Activated B cell treated with CpG ODN at 0.5 μM for 24 hours (primary cell): ENCODE measurements at regions of chr19 and their contacts with region 1.

Region 1: GRCh38 chr19:41521931-41522555 is 53.9 kb upstream of the CEACAM21 start:
- DNase-seq: peak; percentile 59
- ATAC-seq: peak; percentile 43
- H3K4me3 Mint-ChIP-seq: peak overlapping the region; percentile 85
- H3K27ac Mint-ChIP-seq: peak overlapping the region; percentile 98
- H3K4me1 Mint-ChIP-seq: peaks cover 43% of the 10 kb centered on the region
- H3K27me3 Mint-ChIP-seq: no peaks in the 10 kb centered on the region
- CTCF ChIP-seq: no peak

Region 2: GRCh38 chr19:41462497-41462896 is 59.5 kb before region 1 on chr19:
- CTCF ChIA-PET with region 1: no interaction called
- POLR2A ChIA-PET with region 1: interaction called, 5 read pairs
- intact Hi-C with region 1: loop called (anchors 2 kb)
- DNase-seq: no peak
- ATAC-seq: no peak
- H3K4me3 Mint-ChIP-seq: peak overlapping the region; percentile 7
- H3K27ac Mint-ChIP-seq: peak overlapping the region; percentile 93
- H3K4me1 Mint-ChIP-seq: peaks cover 31% of the 10 kb centered on the region
- H3K27me3 Mint-ChIP-seq: peaks cover 16% of the 10 kb centered on the region
- CTCF ChIP-seq: no peak

Region 3: DNA sequence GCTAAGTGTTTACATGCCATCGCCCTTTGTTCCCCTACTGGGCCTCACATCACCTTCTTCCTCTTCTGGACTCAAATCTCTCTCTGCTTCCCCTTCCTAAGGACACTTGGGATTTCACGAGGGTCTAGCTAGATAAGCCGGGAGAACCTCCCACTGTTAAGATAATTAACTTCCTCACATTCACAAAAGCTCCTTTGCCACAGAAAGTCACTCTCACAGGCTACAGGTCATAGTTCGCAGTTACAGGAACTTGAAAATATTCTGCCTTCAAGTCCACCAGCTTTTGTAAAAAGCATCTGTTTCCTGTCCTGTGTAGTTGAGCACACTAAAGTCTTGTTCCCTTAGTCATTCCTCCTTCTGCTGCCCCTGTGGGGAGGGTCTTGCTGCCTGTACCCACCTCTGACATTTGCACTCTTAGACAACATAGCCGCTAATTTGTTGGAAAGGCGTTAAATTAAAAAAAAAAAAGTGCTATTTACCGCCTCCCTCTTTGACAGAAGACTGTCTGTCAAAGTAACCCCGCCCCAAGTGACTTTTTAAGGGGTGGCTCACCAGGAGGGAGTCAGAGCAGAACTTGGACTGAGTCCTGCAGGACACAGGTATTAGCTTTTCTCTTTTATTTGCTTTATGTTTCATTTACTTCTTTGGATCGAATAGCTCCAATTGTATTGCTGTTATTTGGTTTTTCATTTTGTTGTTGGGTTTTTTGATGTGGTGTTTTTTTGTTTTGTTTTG is 27.1 kb after region 1 on chr19:
- CTCF ChIA-PET with region 1: interaction called, 4 read pairs
- POLR2A ChIA-PET with region 1: interaction called, 19 read pairs
- intact Hi-C with region 1: loop called (anchors 2 kb)
- DNase-seq: no peak
- ATAC-seq: peak; percentile 58
- H3K4me3 Mint-ChIP-seq: peak overlapping the region; percentile 97
- H3K27ac Mint-ChIP-seq: peak overlapping the region; percentile 99
- H3K4me1 Mint-ChIP-seq: peaks cover 92% of the 10 kb centered on the region
- H3K27me3 Mint-ChIP-seq: no peaks in the 10 kb centered on the region
- CTCF ChIP-seq: no peak

Region 4: GRCh38 chr19:41746593-41747227 is 224.7 kb after region 1 on chr19:
- CTCF ChIA-PET with region 1: no interaction called
- POLR2A ChIA-PET with region 1: no interaction called
- intact Hi-C with region 1: no loop called
- DNase-seq: no peak
- ATAC-seq: peak; percentile 47
- H3K4me3 Mint-ChIP-seq: no peak overlapping the region
- H3K27ac Mint-ChIP-seq: no peak overlapping the region
- H3K4me1 Mint-ChIP-seq: peaks cover 17% of the 10 kb centered on the region
- H3K27me3 Mint-ChIP-seq: peaks cover 35% of the 10 kb centered on the region
- CTCF ChIP-seq: no peak